ENCODE measurements at regions of chr14 and their contacts with region 1.

Region 1: DNA sequence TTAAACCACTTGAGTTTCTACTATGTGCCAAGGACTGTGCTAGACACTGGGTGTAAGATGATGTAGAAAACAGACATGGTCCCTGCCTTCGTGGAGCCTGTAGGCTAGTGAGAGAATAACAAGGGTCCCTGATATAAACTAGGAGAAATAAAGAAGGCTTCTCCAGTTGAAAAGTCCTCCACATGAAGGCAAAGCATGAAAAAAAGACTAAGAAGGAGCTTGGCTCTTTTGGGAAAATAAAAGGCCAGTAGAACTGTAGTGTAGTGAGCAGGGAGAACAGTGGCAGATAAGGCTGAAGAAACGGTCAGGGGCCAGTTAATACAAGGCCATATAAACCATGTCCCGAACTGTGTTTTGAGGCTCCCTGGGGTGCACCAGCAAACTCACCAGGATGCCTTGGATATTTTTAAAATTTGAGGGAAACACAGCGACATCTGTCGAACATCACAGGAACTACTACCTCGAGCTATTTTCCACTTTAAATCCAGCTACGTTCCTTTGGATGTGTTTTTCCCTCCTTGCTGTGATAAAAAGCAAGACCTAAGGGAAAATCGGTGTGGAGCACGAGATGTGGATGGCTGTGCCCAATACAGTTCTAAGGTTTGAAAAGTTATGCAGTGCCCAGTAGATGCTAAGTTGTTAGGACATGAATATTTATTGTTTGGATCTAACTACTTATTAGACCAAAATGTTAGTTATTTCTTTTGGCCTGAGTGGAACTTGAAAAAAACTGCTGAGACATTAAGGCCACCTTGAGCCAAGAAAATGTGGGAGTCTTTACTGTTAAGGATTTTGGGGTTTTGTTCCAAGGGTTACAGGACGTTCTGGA is 8.5 kb upstream of the CFL2 start:
- DNase-seq: peak; percentile 59
- H3K27ac ChIP-seq: no peak overlapping the region
- CTCF ChIP-seq: peak; percentile 80

Region 2: GRCh38 chr14:34643361-34643760 is 79.6 kb before region 1 on chr14:
- CTCF ChIA-PET with region 1: no interaction called
- POLR2A ChIA-PET with region 1: no interaction called
- DNase-seq: no peak
- H3K27ac ChIP-seq: no peak overlapping the region
- CTCF ChIP-seq: no peak

Region 3: DNA sequence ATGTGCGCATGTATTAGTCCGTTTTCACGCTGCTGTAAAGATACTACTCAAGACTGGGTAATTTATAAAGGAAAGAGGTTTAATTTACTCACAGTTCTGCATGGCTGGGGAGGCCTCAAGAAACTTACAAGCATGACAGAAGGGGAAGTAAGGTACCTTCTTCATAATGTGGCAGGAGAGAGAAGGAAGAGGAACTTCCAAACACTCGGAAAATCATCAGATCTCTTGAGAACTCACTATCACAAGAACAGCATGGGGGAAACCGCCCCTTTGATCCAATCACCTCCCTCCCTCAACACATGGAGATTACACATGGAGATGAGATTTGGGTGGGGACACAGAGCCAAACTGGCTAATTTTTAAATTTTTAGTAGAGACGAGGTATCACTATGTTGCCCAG is 51.2 kb before region 1 on chr14:
- CTCF ChIA-PET with region 1: interaction called, 16 read pairs
- POLR2A ChIA-PET with region 1: no interaction called
- DNase-seq: no peak
- H3K27ac ChIP-seq: no peak overlapping the region
- CTCF ChIP-seq: no peak